Activated CD4-positive, alpha-beta memory T cell treated with anti-CD3 and anti-CD28 coated beads, Interleukin-2, amount 10 ng/mL, durations not matched to agents 7 days and 5 days (primary cell): ENCODE measurements at regions of chr2 and their contacts with region 1.

Region 1: DNA sequence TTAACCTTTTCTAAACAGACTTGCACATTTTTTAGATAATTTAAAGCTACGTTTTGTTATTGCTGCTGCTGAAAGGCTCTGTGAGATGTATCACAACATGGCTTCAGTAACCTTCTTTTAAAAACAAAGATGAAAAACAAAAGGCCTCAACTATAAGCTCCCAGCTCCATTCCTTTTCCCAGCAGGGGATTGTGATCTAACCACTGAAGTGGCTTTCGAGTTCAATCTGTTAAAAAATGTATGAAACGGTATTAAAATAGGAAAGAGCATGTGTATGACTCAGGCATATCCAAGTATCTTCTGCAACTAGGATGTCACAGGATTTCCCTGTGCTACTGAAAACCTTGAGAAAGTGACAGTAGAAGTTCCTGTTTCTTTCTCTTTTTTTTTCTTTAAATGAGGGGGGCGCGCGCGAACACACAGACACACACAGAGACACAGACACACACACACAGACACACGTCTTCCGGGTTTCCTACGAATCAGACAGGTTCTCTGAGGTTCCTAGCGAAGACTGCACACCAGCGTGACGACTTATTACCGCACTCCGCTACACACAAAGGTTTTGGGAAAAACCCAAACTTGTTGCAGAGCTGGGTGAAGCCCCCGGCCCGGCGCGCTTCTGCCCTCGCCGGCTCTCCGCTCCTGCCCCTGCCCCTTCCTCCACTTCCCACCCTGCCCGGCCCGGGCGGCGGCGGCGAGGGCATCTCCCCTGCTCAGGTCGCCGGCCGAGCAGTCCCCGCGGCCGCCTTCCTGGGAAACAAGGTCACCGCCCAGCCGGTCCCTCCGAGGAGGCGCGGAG is 86.8 kb downstream of the RBMS1 start:
- DNase-seq: peak; percentile 70
- H3K4me3 Mint-ChIP-seq: peak overlapping the region; percentile 93
- H3K27ac Mint-ChIP-seq: peak overlapping the region; percentile 88
- H3K4me1 Mint-ChIP-seq: peaks cover 80% of the 10 kb centered on the region
- H3K27me3 Mint-ChIP-seq: peaks cover 3% of the 10 kb centered on the region

Region 2: GRCh38 chr2:160387558-160388262 is 19.1 kb before region 1 on chr2:
- CTCF ChIA-PET with region 1: no interaction called
- POLR2A ChIA-PET with region 1: interaction called, 18 read pairs
- DNase-seq: no peak
- H3K4me3 Mint-ChIP-seq: no peak overlapping the region
- H3K27ac Mint-ChIP-seq: peak overlapping the region; percentile 78
- H3K4me1 Mint-ChIP-seq: peaks cover 65% of the 10 kb centered on the region
- H3K27me3 Mint-ChIP-seq: no peaks in the 10 kb centered on the region

Region 3: DNA sequence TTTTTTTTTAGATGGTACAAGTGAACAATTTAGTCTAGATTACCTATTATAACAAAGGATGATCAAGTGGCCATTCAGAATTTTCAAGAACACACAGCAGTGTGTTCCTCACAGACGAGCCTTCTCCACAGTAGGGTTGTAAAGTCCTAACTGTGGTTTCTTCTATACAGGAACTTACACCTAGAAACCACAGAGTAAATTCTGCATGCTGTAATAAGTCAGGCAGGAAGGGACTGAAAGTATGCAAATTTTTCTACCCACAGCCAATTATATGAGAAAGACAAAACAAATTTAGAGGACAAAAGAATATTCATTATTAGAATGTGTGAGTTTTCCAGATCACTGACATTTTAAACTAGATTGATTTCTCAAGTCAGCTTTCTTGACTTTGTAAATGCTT is 12.6 kb before region 1 on chr2:
- CTCF ChIA-PET with region 1: no interaction called
- POLR2A ChIA-PET with region 1: interaction called, 18 read pairs
- DNase-seq: no peak
- H3K4me3 Mint-ChIP-seq: peak overlapping the region; percentile 15
- H3K27ac Mint-ChIP-seq: peak overlapping the region; percentile 49
- H3K4me1 Mint-ChIP-seq: peaks cover 61% of the 10 kb centered on the region
- H3K27me3 Mint-ChIP-seq: no peaks in the 10 kb centered on the region

Region 4: GRCh38 chr2:160419776-160420505 is 13.1 kb after region 1 on chr2:
- CTCF ChIA-PET with region 1: interaction called, 4 read pairs
- POLR2A ChIA-PET with region 1: interaction called, 11 read pairs
- DNase-seq: no peak
- H3K4me3 Mint-ChIP-seq: no peak overlapping the region
- H3K27ac Mint-ChIP-seq: no peak overlapping the region
- H3K4me1 Mint-ChIP-seq: peaks cover 54% of the 10 kb centered on the region
- H3K27me3 Mint-ChIP-seq: no peaks in the 10 kb centered on the region

Region 5: GRCh38 chr2:160429248-160430000 is 22.6 kb after region 1 on chr2:
- CTCF ChIA-PET with region 1: interaction called, 40 read pairs
- POLR2A ChIA-PET with region 1: interaction called, 26 read pairs
- DNase-seq: no peak
- H3K4me3 Mint-ChIP-seq: no peak overlapping the region
- H3K27ac Mint-ChIP-seq: peak overlapping the region; percentile 88
- H3K4me1 Mint-ChIP-seq: peaks cover 58% of the 10 kb centered on the region
- H3K27me3 Mint-ChIP-seq: peaks cover 2% of the 10 kb centered on the region